ENCODE measurements at regions of chr2 and their contacts with region 1.

Region 1: GRCh38 chr2:233917116-233917515 is at the start of gene TRPM8:
- DNase-seq: no peak
- H3K4me3 ChIP-seq: no peak within 1 kb of the TSS
- H3K27me3 ChIP-seq: no peaks in the 10 kb centered on the region
- CTCF ChIP-seq: no peak
- polyA plus RNA-seq, gene TRPM8: not detected in 2 replicates

Region 2: DNA sequence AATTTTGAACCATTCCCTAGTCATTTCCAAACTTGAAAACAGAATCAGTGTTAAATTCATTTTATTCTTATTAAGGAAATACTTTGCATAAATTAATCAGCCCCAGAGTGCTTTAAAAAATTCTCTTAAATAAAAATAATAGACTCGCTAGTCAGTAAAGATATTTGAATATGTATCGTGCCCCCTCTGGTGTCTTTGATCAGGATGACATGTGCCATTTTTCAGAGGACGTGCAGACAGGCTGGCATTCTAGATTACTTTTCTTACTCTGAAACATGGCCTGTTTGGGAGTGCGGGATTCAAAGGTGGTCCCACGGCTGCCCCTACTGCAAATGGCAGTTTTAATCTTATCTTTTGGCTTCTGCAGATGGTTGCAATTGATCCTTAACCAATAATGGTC is 144.5 kb before region 1 on chr2:
- CTCF ChIA-PET with region 1: no interaction called
- POLR2A ChIA-PET with region 1: no interaction called
- DNase-seq: no peak
- H3K4me3 ChIP-seq: no peak overlapping the region
- H3K27me3 ChIP-seq: no peaks in the 10 kb centered on the region
- CTCF ChIP-seq: no peak

Region 3: DNA sequence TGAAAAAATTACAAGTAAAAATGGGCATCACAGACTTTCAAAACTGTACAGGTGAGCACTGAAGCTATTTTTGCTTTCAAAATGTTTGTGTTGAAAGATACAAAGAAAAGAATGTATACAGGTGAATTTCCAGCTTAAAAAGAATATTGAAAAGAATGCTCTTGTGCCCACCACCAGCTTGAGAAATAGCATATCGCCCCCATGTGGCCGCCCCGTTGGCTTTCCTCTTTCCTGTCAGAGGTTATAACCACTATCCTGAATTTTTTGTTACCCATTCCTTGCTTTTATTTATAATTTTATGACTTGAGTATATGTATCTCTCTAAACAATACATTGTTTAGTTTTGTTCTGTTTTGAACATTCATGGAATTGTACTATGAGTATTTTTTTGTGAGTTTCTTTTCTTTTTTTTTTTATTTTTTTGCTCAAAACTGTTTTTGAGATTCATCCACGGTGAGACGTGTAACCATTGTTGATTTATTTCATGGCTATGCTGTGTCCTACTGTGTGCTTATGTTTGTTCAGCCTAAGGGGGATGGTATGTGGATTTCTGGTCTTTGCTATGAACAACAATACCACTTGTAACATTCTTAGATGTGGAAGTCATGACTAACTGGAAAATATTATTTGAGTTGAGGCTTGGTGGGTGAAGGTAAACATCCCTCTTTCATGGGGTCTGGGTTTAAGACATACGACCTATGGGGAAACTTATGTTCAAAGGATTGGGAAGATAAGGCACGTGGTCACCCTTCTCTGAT is 11.7 kb after region 1 on chr2:
- CTCF ChIA-PET with region 1: interaction called, 10 read pairs
- POLR2A ChIA-PET with region 1: no interaction called
- DNase-seq: no peak
- H3K4me3 ChIP-seq: no peak overlapping the region
- H3K27me3 ChIP-seq: peaks cover 1% of the 10 kb centered on the region
- CTCF ChIP-seq: peak; percentile 55

Region 4: DNA sequence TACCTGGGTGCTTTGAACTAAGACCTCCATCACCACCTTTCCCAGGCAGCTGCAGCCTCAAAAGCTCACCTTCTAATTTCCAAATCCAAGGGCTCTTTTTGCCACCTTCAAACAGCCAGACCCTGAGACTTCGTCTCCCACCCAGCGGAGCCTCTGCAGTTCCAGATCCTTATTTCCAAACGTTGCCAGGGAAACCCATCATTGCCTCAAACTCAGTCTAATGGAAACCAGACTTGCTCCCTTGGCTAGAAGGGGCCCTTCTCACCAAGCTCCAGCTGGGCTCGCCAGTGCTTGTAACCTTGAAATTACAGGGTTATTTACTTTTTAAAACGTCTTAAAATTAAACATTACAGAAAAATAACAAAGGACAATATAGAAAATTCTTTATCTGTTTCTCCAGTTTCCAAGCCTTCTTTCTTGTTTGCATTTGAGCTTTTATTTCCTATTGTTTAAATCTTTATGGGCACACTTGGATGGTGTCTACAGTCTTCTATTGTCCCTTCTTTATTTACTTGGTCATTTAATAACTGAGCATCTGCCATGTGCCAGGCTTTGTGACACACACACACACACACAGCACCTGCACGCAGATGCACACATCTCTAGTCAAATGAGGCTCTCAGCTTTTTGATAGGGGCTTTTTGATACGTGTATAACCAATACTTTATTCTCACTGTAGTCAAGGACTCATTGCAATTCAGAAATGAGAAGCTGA is 36.1 kb after region 1 on chr2:
- CTCF ChIA-PET with region 1: no interaction called
- POLR2A ChIA-PET with region 1: no interaction called
- DNase-seq: no peak
- H3K4me3 ChIP-seq: no peak overlapping the region
- H3K27me3 ChIP-seq: no peaks in the 10 kb centered on the region; the same call in 1 of the 2 replicates
- CTCF ChIP-seq: no peak

Region 5: GRCh38 chr2:234125451-234126145 is 208.5 kb after region 1 on chr2:
- CTCF ChIA-PET with region 1: no interaction called
- POLR2A ChIA-PET with region 1: no interaction called
- DNase-seq: no peak
- H3K4me3 ChIP-seq: no peak overlapping the region
- H3K27me3 ChIP-seq: 0 out of 2 replicates have a peak, but pooled peaks cover 5% of the 10 kb centered on the region
- CTCF ChIP-seq: no peak

Measured in BJ (cell line).